Body of pancreas (tissue), 4 donors: ENCODE measurements at regions of chr6 and their contacts with region 1.

Region 1: GRCh38 chr6:117602151-117602898 is at the start of gene GOPC:
- DNase-seq: peak; percentile 95 to 98 (median 98)
- ATAC-seq: peak; percentile 99
- H3K4me3 ChIP-seq: peak within 1 kb of the TSS; percentile 67 to 75
- H3K27ac ChIP-seq: peak within 1 kb of the TSS; percentile 86 to 91 (median 90)
- H3K4me1 ChIP-seq: peaks cover 23% of the 10 kb centered on the region
- H3K27me3 ChIP-seq: no peaks in the 10 kb centered on the region
- CTCF ChIP-seq: peak in 2 of 7 experiments; percentile 5 to 9
- POLR2A ChIP-seq: peak; percentile 79 to 93 (median 93)
- total RNA-seq, gene GOPC: 7.9 to 16.6 TPM

Region 2: DNA sequence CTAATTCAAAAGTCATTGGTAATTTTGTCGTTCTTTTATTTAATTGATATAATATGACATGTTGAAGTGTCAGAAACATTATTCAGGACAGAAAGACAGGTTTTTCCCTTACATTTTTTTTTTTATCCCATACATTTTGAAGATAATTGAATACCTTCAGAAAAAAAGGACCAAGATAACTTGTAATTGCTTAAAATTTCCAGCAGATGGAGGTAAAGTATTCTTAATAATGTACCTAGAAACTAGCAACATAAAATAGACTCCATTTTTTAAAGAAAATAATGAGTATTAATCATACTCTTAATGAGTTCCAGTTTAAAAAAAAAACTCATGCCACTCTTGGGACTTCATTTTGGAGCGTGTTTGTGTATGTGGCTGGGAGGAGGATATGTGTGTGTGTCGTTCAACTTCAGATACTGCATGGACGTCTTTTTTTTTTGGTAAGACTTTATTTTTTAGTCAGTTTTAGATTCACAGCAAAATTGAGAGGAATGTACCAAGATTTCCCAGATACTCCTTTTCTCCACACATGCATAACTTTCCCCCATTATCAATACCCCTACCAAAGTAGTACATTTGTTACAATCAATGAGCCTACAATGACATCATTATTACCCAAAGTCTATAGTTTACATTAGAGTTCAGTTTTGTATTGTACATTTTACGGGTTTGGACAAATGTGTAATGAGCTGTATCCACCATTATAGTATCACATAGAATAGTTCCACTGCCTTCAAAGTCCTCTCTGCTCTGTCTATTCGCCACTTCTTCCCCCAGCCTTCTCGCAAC is 256.0 kb before region 1 on chr6:
- intact Hi-C with region 1: loop called (anchors 10 kb)
- DNase-seq: no peak
- ATAC-seq: peak; percentile 42
- H3K4me3 ChIP-seq: no peak overlapping the region
- H3K27ac ChIP-seq: no peak overlapping the region
- H3K4me1 ChIP-seq: no peaks in the 10 kb centered on the region
- H3K27me3 ChIP-seq: no peaks in the 10 kb centered on the region
- CTCF ChIP-seq: peak in 6 of 7 experiments; percentile 25 to 58 (median 49)
- POLR2A ChIP-seq: no peak

Region 3: GRCh38 chr6:117536317-117536716 is 66.0 kb before region 1 on chr6:
- intact Hi-C with region 1: no loop called
- DNase-seq: no peak
- ATAC-seq: no peak
- H3K4me3 ChIP-seq: no peak overlapping the region
- H3K27ac ChIP-seq: no peak overlapping the region
- H3K4me1 ChIP-seq: no peaks in the 10 kb centered on the region
- H3K27me3 ChIP-seq: no peaks in the 10 kb centered on the region
- CTCF ChIP-seq: no peak
- POLR2A ChIP-seq: no peak

Region 4: GRCh38 chr6:117938311-117938995 is 336.1 kb after region 1 on chr6:
- intact Hi-C with region 1: no loop called
- DNase-seq: peak; percentile 8 to 19 (median 16)
- ATAC-seq: peak; percentile 30
- H3K4me3 ChIP-seq: no peak overlapping the region
- H3K27ac ChIP-seq: no peak overlapping the region
- H3K4me1 ChIP-seq: no peaks in the 10 kb centered on the region
- H3K27me3 ChIP-seq: no peaks in the 10 kb centered on the region
- CTCF ChIP-seq: no peak
- POLR2A ChIP-seq: no peak